Naive thymus-derived CD8-positive, alpha-beta T cell (primary cell): ENCODE measurements at regions of chr14 and their contacts with region 1.

Region 1: GRCh38 chr14:50823051-50823761 is 7.8 kb downstream of the NIN start:
- DNase-seq: peak in 1 of 10 donors; percentile 23
- ATAC-seq: peak; percentile 7 to 21
- H3K4me3 Mint-ChIP-seq: peak overlapping the region; percentile 62 to 87 (median 84)
- H3K27ac Mint-ChIP-seq: peak overlapping the region; percentile 87 to 97 (median 95)
- H3K4me1 Mint-ChIP-seq: peaks cover 56 to 97% (median 90%) of the 10 kb centered on the region in 4 donors
- H3K27me3 Mint-ChIP-seq: no peaks in the 10 kb centered on the region

Region 2: DNA sequence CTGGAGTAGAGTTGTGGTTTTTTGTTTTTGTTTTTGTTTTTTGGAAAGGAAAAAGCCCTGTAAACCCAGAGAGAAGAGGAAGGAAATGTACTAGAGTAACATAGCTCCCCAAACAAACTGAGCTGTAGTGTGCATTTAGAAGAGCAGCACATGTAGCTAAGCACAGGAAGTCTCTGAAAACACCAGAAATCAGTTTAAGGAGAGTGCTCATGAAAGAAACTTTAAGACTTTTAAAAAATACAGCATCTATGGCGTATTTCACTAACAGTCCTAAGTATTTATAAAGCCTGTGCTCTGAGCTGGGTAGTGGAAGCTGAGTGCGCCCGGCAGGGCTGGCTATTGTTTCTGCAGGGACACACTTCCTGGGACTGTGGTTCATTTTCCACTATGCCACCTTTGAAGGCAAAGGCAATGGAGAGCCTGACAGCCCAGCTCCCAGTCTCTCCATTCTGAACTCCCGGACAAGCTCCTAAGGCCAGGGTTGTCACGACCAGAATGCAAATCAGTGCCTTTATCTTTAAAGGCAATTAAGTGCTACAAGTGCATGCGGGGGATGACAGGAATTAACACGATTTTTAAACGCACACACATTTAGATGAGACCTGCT is 37.6 kb before region 1 on chr14:
- POLR2A ChIA-PET with region 1: interaction called, 79 read pairs
- DNase-seq: peak in 2 of 10 donors; percentile 39 to 44
- ATAC-seq: peak; percentile 64 to 72
- H3K4me3 Mint-ChIP-seq: peak overlapping the region; percentile 50 to 85 (median 63)
- H3K27ac Mint-ChIP-seq: peak overlapping the region; percentile 89 to 98 (median 96)
- H3K4me1 Mint-ChIP-seq: peaks cover 43 to 96% (median 85%) of the 10 kb centered on the region in 4 donors
- H3K27me3 Mint-ChIP-seq: no peaks in the 10 kb centered on the region

Region 3: DNA sequence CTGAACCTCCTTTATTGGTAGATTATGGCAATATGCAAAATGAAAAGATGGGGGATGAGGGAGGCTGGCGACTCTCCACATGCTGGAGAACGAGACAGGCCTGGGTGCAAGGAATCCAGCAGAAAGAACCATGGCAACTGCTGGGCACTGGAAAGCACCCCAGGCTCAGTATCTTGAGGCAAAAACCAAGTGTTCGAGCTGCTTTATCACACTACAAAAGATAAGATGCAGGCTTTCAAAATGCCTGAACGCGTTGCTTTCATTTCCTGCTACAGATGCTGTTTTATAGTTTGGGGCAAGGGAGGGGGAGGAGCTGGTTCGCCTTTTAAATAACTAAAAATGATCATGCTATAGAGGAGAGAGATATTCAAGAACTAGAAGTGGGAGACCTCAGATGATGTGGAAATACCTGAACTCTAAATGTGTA is 31.1 kb before region 1 on chr14:
- POLR2A ChIA-PET with region 1: interaction called, 79 read pairs
- DNase-seq: peak in 5 of 10 donors; percentile 12 to 55 (median 46)
- ATAC-seq: peak; percentile 70
- H3K4me3 Mint-ChIP-seq: peak overlapping the region; percentile 68 to 88 (median 82)
- H3K27ac Mint-ChIP-seq: peak overlapping the region; percentile 88 to 99 (median 98)
- H3K4me1 Mint-ChIP-seq: peaks cover 45 to 99% (median 88%) of the 10 kb centered on the region in 4 donors
- H3K27me3 Mint-ChIP-seq: no peaks in the 10 kb centered on the region

Region 4: GRCh38 chr14:51398898-51399297 is 575.7 kb after region 1 on chr14:
- POLR2A ChIA-PET with region 1: no interaction called
- DNase-seq: no peak
- ATAC-seq: no peak
- H3K4me3 Mint-ChIP-seq: no peak overlapping the region
- H3K27ac Mint-ChIP-seq: no peak overlapping the region
- H3K4me1 Mint-ChIP-seq: no peaks in the 10 kb centered on the region
- H3K27me3 Mint-ChIP-seq: peaks cover 6 to 46% (median 17%) of the 10 kb centered on the region in 5 donors